Breast epithelium (tissue), 4 donors: ENCODE measurements at regions of chr4 and their contacts with region 1.

Region 1: GRCh38 chr4:72295966-72296557 is 264.3 kb downstream of the NPFFR2 start:
- DNase-seq: no peak
- H3K4me3 ChIP-seq: no peak overlapping the region
- H3K27ac ChIP-seq: no peak overlapping the region
- H3K4me1 ChIP-seq: no peaks in the 10 kb centered on the region
- H3K27me3 ChIP-seq: no peaks in the 10 kb centered on the region
- CTCF ChIP-seq: peak; percentile 13 to 44 (median 41)
- POLR2A ChIP-seq: no peak

Region 2: DNA sequence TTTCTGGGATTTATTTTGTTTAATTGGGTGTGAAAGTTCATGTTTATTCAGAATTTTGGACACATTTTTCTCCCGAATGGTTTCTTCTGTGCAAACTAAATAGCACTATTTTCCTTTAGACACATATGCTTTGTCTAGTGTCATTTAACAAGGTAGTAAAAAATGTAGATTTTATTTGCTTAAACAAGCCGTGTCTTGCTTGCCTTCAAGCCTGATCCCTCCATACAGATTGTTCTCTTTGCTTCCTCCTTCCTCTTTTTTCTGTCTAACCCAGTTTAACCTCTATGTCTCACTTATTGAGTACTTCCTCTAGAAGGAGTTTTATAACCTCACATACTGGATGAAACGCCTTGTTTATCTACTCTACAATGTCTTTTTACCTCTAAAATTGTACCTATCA is 52.4 kb before region 1 on chr4:
- intact Hi-C with region 1: no loop called
- DNase-seq: no peak
- H3K4me3 ChIP-seq: no peak overlapping the region
- H3K27ac ChIP-seq: no peak overlapping the region
- H3K4me1 ChIP-seq: no peaks in the 10 kb centered on the region
- H3K27me3 ChIP-seq: no peaks in the 10 kb centered on the region
- CTCF ChIP-seq: no peak
- POLR2A ChIP-seq: no peak

Region 3: DNA sequence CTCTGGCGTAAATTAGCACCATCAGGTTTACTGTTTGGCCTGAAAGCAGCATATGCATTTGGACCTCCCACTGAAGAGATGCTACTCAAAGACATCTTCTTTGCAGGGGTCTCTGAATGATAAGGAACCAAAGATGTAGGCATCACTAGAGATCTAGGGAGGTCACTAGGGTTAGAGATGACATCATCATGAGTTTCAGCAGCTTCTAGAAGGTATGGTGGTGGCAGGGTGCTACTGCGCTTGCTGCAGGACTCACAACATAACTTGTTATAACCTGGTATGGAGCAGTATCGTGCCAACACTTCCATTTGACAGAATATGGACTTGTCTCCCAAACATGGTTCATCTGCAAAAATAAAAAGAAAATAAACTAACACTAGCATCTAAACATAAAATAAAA is 12.7 kb before region 1 on chr4:
- intact Hi-C with region 1: no loop called
- DNase-seq: no peak
- H3K4me3 ChIP-seq: no peak overlapping the region
- H3K27ac ChIP-seq: no peak overlapping the region
- H3K4me1 ChIP-seq: no peaks in the 10 kb centered on the region
- H3K27me3 ChIP-seq: no peaks in the 10 kb centered on the region
- CTCF ChIP-seq: no peak
- POLR2A ChIP-seq: no peak

Region 4: GRCh38 chr4:72761368-72762038 is 465.4 kb after region 1 on chr4:
- intact Hi-C with region 1: loop called (anchors 10 kb)
- DNase-seq: no peak
- H3K4me3 ChIP-seq: no peak overlapping the region
- H3K27ac ChIP-seq: no peak overlapping the region
- H3K4me1 ChIP-seq: no peaks in the 10 kb centered on the region
- H3K27me3 ChIP-seq: no peaks in the 10 kb centered on the region
- CTCF ChIP-seq: no peak
- POLR2A ChIP-seq: no peak